ENCODE measurements at regions of chr9 and their contacts with region 1.

Region 1: GRCh38 chr9:35646533-35647265 is 4.0 kb downstream of the SIT1 start:
- DNase-seq: peak; percentile 83 to 96 (median 92)
- ATAC-seq: peak; percentile 81 to 83
- H3K4me3 Mint-ChIP-seq: peak overlapping the region; percentile 89 to 98 (median 96)
- H3K27ac Mint-ChIP-seq: peak overlapping the region; percentile 95 to 98 (median 96)
- H3K4me1 Mint-ChIP-seq: peaks cover 32 to 85% (median 55%) of the 10 kb centered on the region in 4 donors
- H3K27me3 Mint-ChIP-seq: no peaks in the 10 kb centered on the region

Region 2: GRCh38 chr9:35616681-35617459 is 29.8 kb before region 1 on chr9:
- POLR2A ChIA-PET with region 1: interaction called, 95 read pairs
- DNase-seq: peak; percentile 53 to 84 (median 64)
- ATAC-seq: peak; percentile 74 to 84
- H3K4me3 Mint-ChIP-seq: peak overlapping the region; percentile 82 to 94 (median 87)
- H3K27ac Mint-ChIP-seq: peak overlapping the region; percentile 90 to 98 (median 94)
- H3K4me1 Mint-ChIP-seq: peaks cover 32 to 88% (median 45%) of the 10 kb centered on the region in 4 donors
- H3K27me3 Mint-ChIP-seq: no peaks in the 10 kb centered on the region

Region 3: GRCh38 chr9:35657546-35658136 is 10.9 kb after region 1 on chr9 and contains the start of gene RMRP:
- POLR2A ChIA-PET with region 1: interaction called, 180 read pairs
- DNase-seq: peak in 9 of 10 donors; percentile 69 to 94 (median 89)
- ATAC-seq: peak; percentile 83 to 85
- H3K4me3 Mint-ChIP-seq: peak within 1 kb of the TSS; percentile 74 to 94 (median 87)
- H3K27ac Mint-ChIP-seq: peak within 1 kb of the TSS; percentile 94 to 100 (median 98)
- H3K4me1 Mint-ChIP-seq: peaks cover 36 to 75% (median 70%) of the 10 kb centered on the region in 4 donors
- H3K27me3 Mint-ChIP-seq: peaks cover 0 to 5% (median 0%) of the 10 kb centered on the region in 5 donors
- polyA plus RNA-seq, gene RMRP: 33.0 TPM in 1 of 3 donors, not detected in the others

Region 4: GRCh38 chr9:35690431-35691333 is 44.0 kb after region 1 on chr9:
- POLR2A ChIA-PET with region 1: interaction called, 15 read pairs
- DNase-seq: peak in 7 of 10 donors; percentile 17 to 39 (median 30)
- ATAC-seq: peak; percentile 63 to 71
- H3K4me3 Mint-ChIP-seq: peak overlapping the region; percentile 86 to 94 (median 88)
- H3K27ac Mint-ChIP-seq: peak overlapping the region; percentile 29 to 87 (median 78)
- H3K4me1 Mint-ChIP-seq: peaks cover 11 to 27% (median 21%) of the 10 kb centered on the region in 4 donors
- H3K27me3 Mint-ChIP-seq: no peaks in the 10 kb centered on the region

Region 5: GRCh38 chr9:35812025-35812602 is 165.4 kb after region 1 on chr9 and contains the start of gene SPAG8:
- POLR2A ChIA-PET with region 1: no interaction called
- DNase-seq: peak; percentile 87 to 99 (median 96)
- ATAC-seq: peak; percentile 65 to 71
- H3K4me3 Mint-ChIP-seq: peak within 1 kb of the TSS; percentile 84 to 99 (median 90)
- H3K27ac Mint-ChIP-seq: peak within 1 kb of the TSS; percentile 92 to 98 (median 96)
- H3K4me1 Mint-ChIP-seq: peaks cover 20 to 46% (median 42%) of the 10 kb centered on the region in 4 donors
- H3K27me3 Mint-ChIP-seq: peaks cover 0 to 2% (median 0%) of the 10 kb centered on the region in 5 donors
- polyA plus RNA-seq, gene SPAG8: 0.17 to 2.2 (median 1.7) TPM